ENCODE measurements at regions of chr12 and their contacts with region 1.

Region 1: DNA sequence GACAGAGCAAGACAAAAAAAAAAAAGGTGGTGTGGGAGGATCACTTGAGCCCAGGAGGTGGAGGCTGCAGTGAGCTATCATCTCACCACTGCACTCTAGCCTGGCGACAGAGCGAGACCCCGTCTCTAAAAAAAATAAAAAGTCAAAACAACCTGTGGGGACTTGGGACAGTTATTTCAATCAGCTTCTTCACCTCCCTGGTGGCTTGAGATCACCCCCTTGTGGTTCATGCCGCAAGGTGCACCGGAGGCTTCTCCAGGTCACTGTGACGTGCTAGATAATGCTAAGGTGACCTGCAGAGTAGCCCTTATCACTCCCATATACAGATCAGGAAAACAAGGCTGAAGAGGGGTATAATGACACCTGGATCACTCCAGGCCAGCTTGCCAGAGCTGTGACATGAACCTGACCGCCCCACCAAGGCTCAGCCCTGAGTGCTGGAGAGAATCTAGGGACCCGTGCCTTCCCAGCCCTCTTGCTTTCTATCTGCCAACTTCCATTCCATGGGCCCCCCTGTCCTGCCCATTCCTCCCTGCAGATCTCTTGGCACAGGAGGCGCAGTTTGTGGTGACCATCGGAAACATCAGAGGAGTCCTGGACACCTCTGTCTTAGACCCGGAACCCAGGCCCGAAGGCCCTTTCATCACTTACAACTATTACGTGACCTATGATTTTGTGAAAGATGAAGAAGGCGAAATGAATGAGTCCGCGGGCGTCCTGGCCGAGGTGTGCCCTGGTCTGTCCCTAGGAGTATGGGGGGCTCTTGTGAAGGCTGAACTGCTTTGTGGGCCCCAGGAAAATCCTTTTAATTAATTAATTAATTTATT is 8.1 kb downstream of the LRRC43 start:
- DNase-seq: peak; percentile 59
- H3K4me3 Mint-ChIP-seq: no peak overlapping the region
- H3K27ac Mint-ChIP-seq: no peak overlapping the region
- H3K4me1 Mint-ChIP-seq: peaks cover 5% of the 10 kb centered on the region
- H3K27me3 Mint-ChIP-seq: peaks cover 9% of the 10 kb centered on the region

Region 2: DNA sequence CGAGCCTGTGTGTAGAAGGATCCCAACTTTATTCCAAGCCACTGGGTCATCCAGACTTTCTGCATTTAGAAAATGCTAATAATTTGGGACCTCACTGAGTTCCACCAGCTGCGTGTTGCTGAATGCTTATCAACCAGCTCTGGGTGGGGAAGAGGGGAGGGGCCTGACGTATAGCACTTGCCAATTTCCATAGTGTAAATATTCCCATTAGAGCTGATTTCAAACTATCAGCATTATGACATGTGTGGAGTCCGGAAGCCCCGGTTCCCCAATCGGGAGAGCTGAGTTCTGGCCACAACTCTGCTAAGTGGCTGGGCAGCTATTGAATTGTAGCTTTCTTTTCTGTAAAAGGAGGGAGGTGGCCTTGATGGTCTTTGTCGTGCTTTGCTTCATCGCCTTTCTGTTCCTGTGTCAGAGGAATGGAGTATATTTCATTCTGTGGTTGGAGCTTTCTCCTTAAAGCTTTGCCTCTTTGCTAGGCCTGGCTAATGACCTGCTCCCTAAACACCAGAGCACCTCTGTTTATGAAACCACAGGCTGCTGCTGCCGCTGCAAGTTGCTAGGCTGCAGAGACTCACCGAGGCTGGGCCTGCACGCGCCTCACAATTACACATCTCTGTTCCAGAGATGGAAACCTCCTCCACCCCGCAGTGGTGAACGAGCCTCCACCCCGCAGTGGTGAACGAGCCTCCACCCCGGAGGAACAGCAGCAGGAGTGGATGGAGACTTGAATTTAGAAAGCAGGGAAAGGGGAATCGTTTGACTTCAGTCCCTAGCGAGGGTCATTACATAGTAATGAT is 177.1 kb before region 1 on chr12:
- intact Hi-C with region 1: no loop called
- DNase-seq: no peak
- H3K4me3 Mint-ChIP-seq: no peak overlapping the region
- H3K27ac Mint-ChIP-seq: no peak overlapping the region
- H3K4me1 Mint-ChIP-seq: no peaks in the 10 kb centered on the region
- H3K27me3 Mint-ChIP-seq: peaks cover 13% of the 10 kb centered on the region

Region 3: DNA sequence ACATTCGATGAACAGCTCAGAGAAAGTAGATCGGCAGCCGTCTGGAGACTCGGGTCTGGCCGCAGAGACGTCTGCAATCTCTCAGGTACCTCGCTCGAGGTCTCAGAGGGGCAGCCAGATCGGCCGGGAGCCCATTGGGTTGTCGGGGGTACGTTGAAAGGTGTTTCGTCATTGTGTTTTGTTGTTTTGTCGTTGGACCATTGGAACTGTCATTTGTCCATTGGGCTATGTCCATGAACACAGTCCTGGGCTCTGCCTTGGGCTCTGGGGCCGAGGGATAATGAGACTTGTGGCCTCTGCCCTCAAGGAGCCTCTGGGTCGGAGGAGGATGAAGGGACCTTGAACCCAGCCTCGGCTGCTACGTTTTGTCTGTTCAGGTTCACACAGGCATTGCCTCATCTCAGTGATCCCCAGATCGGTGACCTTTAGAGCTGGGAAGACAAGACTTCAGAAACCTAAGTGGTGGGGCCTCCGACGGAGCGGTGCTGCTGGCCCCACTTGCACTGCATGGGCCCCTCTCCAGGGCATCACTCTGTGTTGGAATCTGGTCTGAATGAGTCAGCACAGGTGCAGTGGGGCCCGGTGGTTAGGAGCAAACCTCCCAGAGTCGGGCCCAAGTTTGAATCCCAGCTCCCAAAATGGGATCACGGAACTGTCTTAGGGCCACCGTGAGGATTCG is 136.1 kb before region 1 on chr12:
- intact Hi-C with region 1: loop called (anchors 1 kb)
- DNase-seq: no peak
- H3K4me3 Mint-ChIP-seq: no peak overlapping the region
- H3K27ac Mint-ChIP-seq: no peak overlapping the region
- H3K4me1 Mint-ChIP-seq: no peaks in the 10 kb centered on the region
- H3K27me3 Mint-ChIP-seq: no peaks in the 10 kb centered on the region

Region 4: GRCh38 chr12:122123051-122123760 is 67.8 kb before region 1 on chr12:
- intact Hi-C with region 1: loop called (anchors 2 kb)
- DNase-seq: peak; percentile 61
- H3K4me3 Mint-ChIP-seq: no peak overlapping the region
- H3K27ac Mint-ChIP-seq: peak overlapping the region; percentile 21
- H3K4me1 Mint-ChIP-seq: peaks cover 22% of the 10 kb centered on the region
- H3K27me3 Mint-ChIP-seq: no peaks in the 10 kb centered on the region

Region 5: GRCh38 chr12:122159882-122160281 is 31.2 kb before region 1 on chr12:
- intact Hi-C with region 1: loop called (anchors 1 kb)
- DNase-seq: no peak
- H3K4me3 Mint-ChIP-seq: no peak overlapping the region
- H3K27ac Mint-ChIP-seq: no peak overlapping the region
- H3K4me1 Mint-ChIP-seq: peaks cover 21% of the 10 kb centered on the region
- H3K27me3 Mint-ChIP-seq: peaks cover 3% of the 10 kb centered on the region